PC-3 (cell line): ENCODE measurements at regions of chrX and their contacts with region 1.

Region 1: DNA sequence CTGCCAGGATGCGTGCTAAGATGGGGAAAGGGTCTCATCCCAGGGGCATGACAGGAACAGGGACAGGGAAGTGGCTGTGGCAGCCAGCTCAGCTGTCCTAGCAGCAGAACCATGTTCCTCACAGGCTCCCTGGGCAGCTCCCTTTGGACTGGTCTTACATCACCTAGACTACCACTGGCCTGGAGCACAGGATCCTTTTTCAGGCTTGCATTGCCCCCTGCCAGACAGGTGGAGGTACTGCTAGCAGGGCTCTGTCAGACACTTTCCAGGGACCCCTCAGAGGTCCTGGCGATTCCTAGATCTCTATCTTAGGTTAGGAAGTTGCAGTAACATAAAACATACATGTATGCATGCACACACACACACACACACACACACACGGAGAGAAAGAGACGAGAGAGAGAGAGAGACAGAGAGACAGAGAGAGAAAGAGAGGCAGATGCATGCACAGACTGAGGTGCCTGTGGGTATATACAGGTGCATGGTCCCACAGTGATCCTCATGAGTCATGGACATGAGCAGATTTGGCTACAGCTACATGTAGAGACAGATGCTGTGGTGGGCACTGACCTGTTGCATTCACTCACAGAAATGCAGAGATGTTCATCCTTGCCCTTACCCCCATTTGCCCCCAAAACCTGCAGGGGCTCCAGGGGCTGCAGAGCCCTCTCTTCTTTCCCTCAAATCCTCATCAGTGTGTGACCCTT is 63.6 kb downstream of the STARD8 start:
- DNase-seq: peak; percentile 65
- ATAC-seq: peak; percentile 94
- H3K4me3 ChIP-seq: no peak overlapping the region
- H3K27ac ChIP-seq: no peak overlapping the region
- H3K4me1 ChIP-seq: no peaks in the 10 kb centered on the region
- H3K27me3 ChIP-seq: no peaks in the 10 kb centered on the region
- CTCF ChIP-seq: peak; percentile 77

Region 2: DNA sequence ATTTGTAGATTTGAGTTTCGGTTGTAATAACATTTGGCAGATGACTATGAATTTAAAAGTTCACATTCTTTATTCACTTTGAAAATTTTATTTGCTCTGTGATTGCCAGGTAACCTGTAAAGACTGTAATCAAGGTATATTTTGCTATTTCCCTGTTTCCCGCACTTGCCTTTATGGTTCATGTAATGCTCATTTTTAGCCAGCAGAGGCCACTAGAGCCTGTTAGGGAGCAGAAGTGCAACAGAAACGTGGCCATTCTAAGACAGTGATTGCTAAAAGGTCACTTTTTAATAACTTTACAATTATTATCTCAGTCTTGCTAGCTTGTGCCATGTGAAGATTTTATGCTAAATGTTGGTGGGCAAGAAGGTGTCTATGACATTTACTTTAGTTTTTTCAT is 199.8 kb before region 1 on chrX:
- CTCF ChIA-PET with region 1: no interaction called
- POLR2A ChIA-PET with region 1: no interaction called
- intact Hi-C with region 1: loop called (anchors 1 kb)
- DNase-seq: peak; percentile 70
- ATAC-seq: peak; percentile 42; the same call in 1 of the 2 replicates
- H3K4me3 ChIP-seq: no peak overlapping the region
- H3K27ac ChIP-seq: no peak overlapping the region
- H3K4me1 ChIP-seq: no peaks in the 10 kb centered on the region
- H3K27me3 ChIP-seq: no peaks in the 10 kb centered on the region
- CTCF ChIP-seq: peak; percentile 74

Region 3: DNA sequence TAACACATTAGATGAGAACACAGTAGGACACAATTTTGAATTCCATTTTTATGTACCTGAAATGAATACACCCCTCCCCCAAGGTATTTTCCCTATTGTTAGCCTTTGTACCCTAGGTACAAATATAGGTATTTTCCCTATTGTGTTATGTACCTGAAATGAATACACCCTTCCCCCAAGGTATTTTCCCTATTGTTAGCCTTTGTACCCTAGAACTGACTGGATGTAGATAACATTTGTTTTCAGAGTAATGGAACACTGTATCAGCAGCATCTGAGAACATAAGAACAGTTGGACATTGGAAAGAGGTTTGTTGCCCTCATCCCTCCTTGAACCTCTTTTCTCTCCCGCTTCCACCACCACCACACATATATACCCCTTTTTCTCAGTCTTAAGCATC is 174.6 kb before region 1 on chrX:
- CTCF ChIA-PET with region 1: no interaction called
- POLR2A ChIA-PET with region 1: interaction called, 3 read pairs
- intact Hi-C with region 1: loop called (anchors 1 kb)
- DNase-seq: no peak
- ATAC-seq: no peak
- H3K4me3 ChIP-seq: no peak overlapping the region
- H3K27ac ChIP-seq: no peak overlapping the region
- H3K4me1 ChIP-seq: no peaks in the 10 kb centered on the region
- H3K27me3 ChIP-seq: no peaks in the 10 kb centered on the region
- CTCF ChIP-seq: no peak

Region 4: GRCh38 chrX:68822641-68823410 is 111.8 kb after region 1 on chrX:
- CTCF ChIA-PET with region 1: no interaction called
- POLR2A ChIA-PET with region 1: no interaction called
- intact Hi-C with region 1: no loop called
- DNase-seq: peak; percentile 67
- ATAC-seq: peak; percentile 79
- H3K4me3 ChIP-seq: no peak overlapping the region
- H3K27ac ChIP-seq: no peak overlapping the region
- H3K4me1 ChIP-seq: peaks cover 9% of the 10 kb centered on the region; the same call in 1 of the 2 replicates
- H3K27me3 ChIP-seq: no peaks in the 10 kb centered on the region
- CTCF ChIP-seq: peak; percentile 74